ENCODE measurements at regions of chr14 and their contacts with region 1.

Region 1: DNA sequence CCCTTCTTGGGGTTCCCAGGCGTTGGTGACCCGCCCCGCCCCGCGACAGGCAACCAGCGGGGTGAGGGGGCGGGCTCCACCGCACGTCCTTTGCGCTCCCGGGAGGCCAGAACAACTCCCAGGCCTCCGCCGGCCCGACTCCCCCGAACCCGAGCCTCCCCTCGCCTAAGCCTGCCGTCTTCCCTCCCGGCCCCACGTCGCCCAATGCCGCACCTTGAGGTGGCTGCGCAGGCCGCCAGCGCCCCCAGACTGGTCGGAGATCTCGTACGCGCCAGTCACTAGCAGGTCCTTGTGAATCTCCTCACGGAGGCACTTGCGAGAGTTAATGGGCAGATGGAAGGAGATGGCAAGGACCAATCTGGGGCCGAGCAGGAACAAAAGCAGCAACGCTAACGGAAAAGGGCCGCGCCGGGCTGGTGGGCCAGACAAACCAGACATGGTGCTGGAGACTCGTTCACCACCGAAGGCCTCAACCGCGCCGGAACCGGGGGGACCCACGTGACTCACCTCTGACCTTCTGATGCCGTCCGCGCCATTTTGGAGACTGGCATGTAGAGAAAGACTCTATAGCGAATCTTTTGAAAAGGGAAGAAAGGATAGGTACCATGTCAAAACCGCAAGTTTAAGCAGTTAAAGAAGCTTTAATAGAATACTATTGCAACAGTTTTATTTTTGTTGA is at the start of gene TMED10:
- DNase-seq: peak; percentile 84 to 95 (median 89)
- ATAC-seq: peak; percentile 75
- H3K4me3 ChIP-seq: peak within 1 kb of the TSS; percentile 79
- H3K4me3 Mint-ChIP-seq: peak within 1 kb of the TSS; percentile 94
- H3K27ac ChIP-seq: peak within 1 kb of the TSS; percentile 99 to 100
- H3K27ac Mint-ChIP-seq: peak within 1 kb of the TSS; percentile 97
- H3K4me1 ChIP-seq: peaks cover 30% of the 10 kb centered on the region
- H3K4me1 Mint-ChIP-seq: peaks cover 53% of the 10 kb centered on the region
- H3K27me3 ChIP-seq: no peaks in the 10 kb centered on the region
- H3K27me3 Mint-ChIP-seq: no peaks in the 10 kb centered on the region
- CTCF ChIP-seq: no peak
- total RNA-seq, gene TMED10: 153 to 156 TPM

Region 2: GRCh38 chr14:75126679-75127473 is 49.4 kb before region 1 on chr14 and contains the start of gene NEK9:
- CTCF ChIA-PET with region 1: no interaction called
- POLR2A ChIA-PET with region 1: interaction called, 23 read pairs
- intact Hi-C with region 1: loop called (anchors 2 to 5 kb)
- DNase-seq: peak; percentile 82 to 93 (median 87)
- ATAC-seq: peak; percentile 82
- H3K4me3 ChIP-seq: peak within 1 kb of the TSS; percentile 92
- H3K4me3 Mint-ChIP-seq: peak within 1 kb of the TSS; percentile 99
- H3K27ac ChIP-seq: peak within 1 kb of the TSS; percentile 89 to 93
- H3K27ac Mint-ChIP-seq: peak within 1 kb of the TSS; percentile 90
- H3K4me1 ChIP-seq: peaks cover 36% of the 10 kb centered on the region
- H3K4me1 Mint-ChIP-seq: peaks cover 44% of the 10 kb centered on the region
- H3K27me3 ChIP-seq: no peaks in the 10 kb centered on the region
- H3K27me3 Mint-ChIP-seq: no peaks in the 10 kb centered on the region
- CTCF ChIP-seq: no peak
- total RNA-seq, gene NEK9: 53.5 to 54.1 TPM

Region 3: GRCh38 chr14:75141967-75142366 is 34.3 kb before region 1 on chr14:
- CTCF ChIA-PET with region 1: interaction called, 3 read pairs
- POLR2A ChIA-PET with region 1: interaction called, 6 read pairs
- intact Hi-C with region 1: loop called in 1 of 2 experiments (anchors 5 kb)
- DNase-seq: peak in 7 of 14 experiments; percentile 8 to 73 (median 47)
- ATAC-seq: peak; percentile 69
- H3K4me3 ChIP-seq: no peak overlapping the region
- H3K4me3 Mint-ChIP-seq: no peak overlapping the region
- H3K27ac ChIP-seq: no peak overlapping the region
- H3K27ac Mint-ChIP-seq: peak overlapping the region; percentile 63
- H3K4me1 ChIP-seq: peaks cover 25% of the 10 kb centered on the region
- H3K4me1 Mint-ChIP-seq: peaks cover 74% of the 10 kb centered on the region
- H3K27me3 ChIP-seq: no peaks in the 10 kb centered on the region
- H3K27me3 Mint-ChIP-seq: no peaks in the 10 kb centered on the region
- CTCF ChIP-seq: peak; percentile 51

Region 4: DNA sequence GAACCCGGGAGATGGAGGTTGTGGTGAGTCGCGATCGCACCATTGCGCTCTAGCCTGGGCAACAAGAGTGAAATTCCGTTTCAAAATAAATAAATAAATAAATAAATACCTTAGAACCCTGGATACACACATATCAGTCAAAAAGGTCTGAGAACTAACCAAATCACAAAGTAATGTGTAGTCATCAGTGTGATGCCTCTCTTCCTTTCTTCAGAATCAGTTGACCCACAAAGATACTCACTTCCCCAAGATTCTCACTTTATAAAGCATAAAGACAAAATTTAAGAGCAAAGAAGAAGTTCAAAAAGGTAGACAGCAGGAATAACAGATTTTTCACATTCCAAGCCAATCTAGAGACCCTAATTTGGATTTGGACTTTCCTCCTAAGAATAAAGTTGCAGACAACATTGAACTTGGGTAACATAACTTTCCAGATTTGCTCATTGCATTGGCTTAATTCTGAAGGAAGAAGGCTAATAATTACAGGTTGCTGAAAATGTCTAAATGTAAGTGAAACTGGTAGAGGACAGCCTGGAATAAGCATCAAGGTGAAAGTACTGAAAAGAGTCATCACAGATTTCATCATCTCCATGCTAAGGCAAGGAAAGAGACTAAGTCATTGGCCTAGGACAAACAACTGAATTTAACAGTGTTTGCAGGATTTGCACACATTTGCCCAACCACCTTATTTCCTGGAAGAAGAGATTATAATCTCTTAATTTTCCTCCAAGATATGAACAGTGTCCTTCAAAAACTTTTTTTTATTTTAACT is 17.3 kb before region 1 on chr14:
- CTCF ChIA-PET with region 1: no interaction called
- POLR2A ChIA-PET with region 1: interaction called, 11 read pairs
- intact Hi-C with region 1: loop called in 1 of 2 experiments (anchors 2 kb)
- DNase-seq: no peak
- ATAC-seq: no peak
- H3K4me3 ChIP-seq: no peak overlapping the region
- H3K4me3 Mint-ChIP-seq: peak overlapping the region; percentile 3
- H3K27ac ChIP-seq: no peak overlapping the region
- H3K27ac Mint-ChIP-seq: peak overlapping the region; percentile 57
- H3K4me1 ChIP-seq: peaks cover 37% of the 10 kb centered on the region
- H3K4me1 Mint-ChIP-seq: peaks cover 67% of the 10 kb centered on the region
- H3K27me3 ChIP-seq: no peaks in the 10 kb centered on the region
- H3K27me3 Mint-ChIP-seq: no peaks in the 10 kb centered on the region
- CTCF ChIP-seq: no peak

Region 5: DNA sequence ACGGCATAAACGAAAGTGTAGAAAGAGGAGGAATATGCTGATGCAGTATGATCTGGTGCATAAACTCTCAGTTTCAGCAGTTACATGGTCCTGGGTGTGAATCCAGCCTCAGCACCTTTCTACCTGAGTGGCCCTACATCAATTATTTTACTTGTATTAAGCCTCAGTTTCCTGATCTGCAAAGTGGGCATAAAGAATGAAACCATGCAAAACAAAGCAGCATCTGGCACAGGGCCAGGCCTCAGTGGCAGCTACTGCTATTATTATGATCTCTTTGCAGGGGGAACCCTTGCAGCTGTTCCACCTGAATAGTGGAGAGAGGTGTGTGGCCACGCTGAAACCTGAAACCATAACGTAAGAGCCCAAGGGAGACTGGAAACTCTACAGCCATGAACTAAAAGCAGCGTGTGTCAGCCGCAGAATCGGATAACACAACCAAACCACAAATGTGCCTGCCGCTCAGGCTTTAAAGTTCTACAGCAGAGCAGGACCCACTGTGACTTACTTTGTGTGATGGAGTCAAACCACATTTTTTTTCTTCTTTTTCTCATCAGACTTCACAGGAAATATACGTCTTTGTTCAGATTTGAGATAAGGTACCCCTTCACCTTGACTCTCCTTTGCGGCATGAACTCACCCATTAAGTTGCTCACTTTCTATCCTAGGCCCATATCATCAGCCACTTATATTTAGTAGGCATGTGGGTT is 73.1 kb after region 1 on chr14:
- CTCF ChIA-PET with region 1: no interaction called
- POLR2A ChIA-PET with region 1: interaction called, 21 read pairs
- intact Hi-C with region 1: loop called in 1 of 2 experiments (anchors 1 kb)
- DNase-seq: peak; percentile 67 to 97 (median 76)
- ATAC-seq: peak; percentile 72
- H3K4me3 ChIP-seq: peak overlapping the region; percentile 19
- H3K4me3 Mint-ChIP-seq: peak overlapping the region; percentile 50
- H3K27ac ChIP-seq: peak overlapping the region; percentile 75 to 78
- H3K27ac Mint-ChIP-seq: peak overlapping the region; percentile 87
- H3K4me1 ChIP-seq: peaks cover 68% of the 10 kb centered on the region
- H3K4me1 Mint-ChIP-seq: peaks cover 75% of the 10 kb centered on the region
- H3K27me3 ChIP-seq: no peaks in the 10 kb centered on the region
- H3K27me3 Mint-ChIP-seq: no peaks in the 10 kb centered on the region
- CTCF ChIP-seq: no peak

Region 6: DNA sequence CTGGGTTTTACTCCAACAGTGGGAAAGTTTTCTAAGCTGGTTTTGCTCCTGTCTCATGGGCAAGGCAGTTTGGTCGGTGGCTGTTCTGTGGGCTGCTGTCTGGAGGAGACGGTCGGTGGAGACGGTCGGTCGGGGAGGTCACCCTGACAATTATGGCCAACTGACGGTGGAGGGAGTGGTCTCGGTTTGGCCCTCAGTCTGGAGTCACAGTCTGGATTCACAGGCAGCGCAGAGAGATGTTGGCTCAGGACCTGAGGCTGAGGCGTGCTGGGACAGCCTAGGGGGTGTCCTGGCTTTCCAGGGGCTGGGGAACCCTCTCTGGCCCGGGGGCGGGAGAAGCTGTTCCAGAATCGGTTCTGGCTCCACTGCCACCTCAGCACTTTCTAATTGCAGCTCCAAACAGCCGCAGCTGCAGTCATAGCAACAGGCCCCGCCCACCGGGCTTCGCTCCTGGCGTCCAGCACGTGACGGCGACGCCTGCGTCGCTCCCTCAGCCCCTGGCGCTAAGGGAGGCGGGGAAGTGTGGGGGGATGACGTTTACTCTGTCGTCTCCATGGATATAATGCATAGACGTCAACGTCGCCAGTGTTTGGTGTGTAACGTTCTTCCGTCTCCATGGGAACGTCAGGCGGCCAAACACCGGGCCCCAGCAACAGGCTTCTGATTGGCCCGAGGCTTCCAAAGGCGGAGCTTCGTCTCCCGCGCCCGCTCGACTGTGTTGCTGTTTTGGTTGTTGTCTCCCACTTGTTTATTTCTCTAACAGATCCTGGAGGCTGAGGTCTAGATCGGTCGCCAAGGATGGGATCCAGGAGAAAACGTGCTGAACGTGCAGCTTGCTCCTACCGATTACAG is 82.6 kb after region 1 on chr14:
- CTCF ChIA-PET with region 1: no interaction called
- POLR2A ChIA-PET with region 1: interaction called, 22 read pairs
- intact Hi-C with region 1: loop called in 1 of 2 experiments (anchors 1 kb)
- DNase-seq: peak; percentile 99 to 100 (median 100)
- ATAC-seq: peak; percentile 86
- H3K4me3 ChIP-seq: peak overlapping the region; percentile 50
- H3K4me3 Mint-ChIP-seq: peak overlapping the region; percentile 81
- H3K27ac ChIP-seq: peak overlapping the region; percentile 93 to 96
- H3K27ac Mint-ChIP-seq: peak overlapping the region; percentile 98
- H3K4me1 ChIP-seq: peaks cover 38% of the 10 kb centered on the region
- H3K4me1 Mint-ChIP-seq: peaks cover 45% of the 10 kb centered on the region
- H3K27me3 ChIP-seq: no peaks in the 10 kb centered on the region
- H3K27me3 Mint-ChIP-seq: no peaks in the 10 kb centered on the region
- CTCF ChIP-seq: no peak

Region 7: DNA sequence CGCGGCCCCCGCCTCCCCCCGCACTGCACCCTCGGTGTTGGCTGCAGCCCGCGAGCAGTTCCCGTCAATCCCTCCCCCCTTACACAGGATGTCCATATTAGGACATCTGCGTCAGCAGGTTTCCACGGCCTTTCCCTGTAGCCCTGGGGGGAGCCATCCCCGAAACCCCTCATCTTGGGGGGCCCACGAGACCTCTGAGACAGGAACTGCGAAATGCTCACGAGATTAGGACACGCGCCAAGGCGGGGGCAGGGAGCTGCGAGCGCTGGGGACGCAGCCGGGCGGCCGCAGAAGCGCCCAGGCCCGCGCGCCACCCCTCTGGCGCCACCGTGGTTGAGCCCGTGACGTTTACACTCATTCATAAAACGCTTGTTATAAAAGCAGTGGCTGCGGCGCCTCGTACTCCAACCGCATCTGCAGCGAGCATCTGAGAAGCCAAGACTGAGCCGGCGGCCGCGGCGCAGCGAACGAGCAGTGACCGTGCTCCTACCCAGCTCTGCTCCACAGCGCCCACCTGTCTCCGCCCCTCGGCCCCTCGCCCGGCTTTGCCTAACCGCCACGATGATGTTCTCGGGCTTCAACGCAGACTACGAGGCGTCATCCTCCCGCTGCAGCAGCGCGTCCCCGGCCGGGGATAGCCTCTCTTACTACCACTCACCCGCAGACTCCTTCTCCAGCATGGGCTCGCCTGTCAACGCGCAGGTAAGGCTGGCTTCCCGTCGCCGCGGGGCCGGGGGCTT is 102.3 kb after region 1 on chr14 and contains the start of gene FOS:
- CTCF ChIA-PET with region 1: no interaction called
- POLR2A ChIA-PET with region 1: interaction called, 4 read pairs
- intact Hi-C with region 1: loop called (anchors 1 kb)
- DNase-seq: peak; percentile 79 to 97 (median 86)
- ATAC-seq: peak; percentile 66
- H3K4me3 ChIP-seq: peak within 1 kb of the TSS; percentile 88
- H3K4me3 Mint-ChIP-seq: peak within 1 kb of the TSS; percentile 94
- H3K27ac ChIP-seq: peak within 1 kb of the TSS; percentile 69 to 82
- H3K27ac Mint-ChIP-seq: peak within 1 kb of the TSS; percentile 92
- H3K4me1 ChIP-seq: peaks cover 71% of the 10 kb centered on the region
- H3K4me1 Mint-ChIP-seq: peaks cover 56% of the 10 kb centered on the region
- H3K27me3 ChIP-seq: peaks cover 4% of the 10 kb centered on the region in 2 experiments
- H3K27me3 Mint-ChIP-seq: peaks cover 73% of the 10 kb centered on the region
- CTCF ChIP-seq: no peak
- total RNA-seq, gene FOS: 1,565 to 1,685 TPM